Mammary epithelial cell (primary cell): ENCODE measurements at regions of chr5 and their contacts with region 1.

Region 1: GRCh38 chr5:176537608-176538504 is 654 bp upstream of the RNF44 start:
- DNase-seq: peak; percentile 99
- H3K4me3 ChIP-seq: peak overlapping the region; percentile 67 to 88 (median 68)
- H3K27ac ChIP-seq: peak overlapping the region; percentile 91
- H3K4me1 ChIP-seq: peaks cover 57% of the 10 kb centered on the region
- H3K27me3 ChIP-seq: no peaks in the 10 kb centered on the region
- CTCF ChIP-seq: no peak

Region 2: GRCh38 chr5:176388444-176389134 is 149.3 kb before region 1 on chr5 and contains the starts of genes HIGD2A and NOP16:
- CTCF ChIA-PET with region 1: no interaction called
- dilution Hi-C with region 1: no loop called
- in situ Hi-C with region 1: no loop called
- intact Hi-C with region 1: loop called (anchors 1 kb)
- DNase-seq: peak; percentile 98
- H3K4me3 ChIP-seq: peak within 1 kb of the TSS; percentile 67 to 79 (median 75)
- H3K27ac ChIP-seq: peak within 1 kb of the TSS; percentile 90
- H3K4me1 ChIP-seq: peaks cover 12% of the 10 kb centered on the region
- H3K27me3 ChIP-seq: no peaks in the 10 kb centered on the region
- CTCF ChIP-seq: no peak
- total RNA-seq, gene HIGD2A: 30.3 to 93.0 TPM
- total RNA-seq, gene NOP16: 8.7 to 61.4 TPM

Region 3: GRCh38 chr5:176447982-176448608 is 89.8 kb before region 1 on chr5 and contains the start of gene FAF2:
- CTCF ChIA-PET with region 1: interaction called, 7 read pairs
- dilution Hi-C with region 1: no loop called
- in situ Hi-C with region 1: no loop called
- intact Hi-C with region 1: loop called (anchors 1 kb)
- DNase-seq: peak; percentile 98
- H3K4me3 ChIP-seq: peak within 1 kb of the TSS; percentile 66 to 90 (median 82)
- H3K27ac ChIP-seq: peak within 1 kb of the TSS; percentile 85
- H3K4me1 ChIP-seq: peaks cover 5% of the 10 kb centered on the region
- H3K27me3 ChIP-seq: no peaks in the 10 kb centered on the region
- CTCF ChIP-seq: peak; percentile 93 to 98
- total RNA-seq, gene FAF2: 48.5 to 58.8 TPM

Region 4: GRCh38 chr5:176492431-176492830 is 45.4 kb before region 1 on chr5:
- CTCF ChIA-PET with region 1: no interaction called
- dilution Hi-C with region 1: no loop called
- in situ Hi-C with region 1: no loop called
- intact Hi-C with region 1: loop called (anchors 1 kb)
- DNase-seq: peak; percentile 88
- H3K4me3 ChIP-seq: no peak overlapping the region
- H3K27ac ChIP-seq: peak overlapping the region; percentile 18
- H3K4me1 ChIP-seq: peaks cover 26% of the 10 kb centered on the region
- H3K27me3 ChIP-seq: no peaks in the 10 kb centered on the region
- CTCF ChIP-seq: no peak

Region 5: GRCh38 chr5:176553262-176554077 is 15.6 kb after region 1 on chr5:
- CTCF ChIA-PET with region 1: no interaction called
- dilution Hi-C with region 1: no loop called
- in situ Hi-C with region 1: no loop called
- intact Hi-C with region 1: loop called (anchors 2 kb)
- DNase-seq: peak; percentile 98
- H3K4me3 ChIP-seq: no peak overlapping the region
- H3K27ac ChIP-seq: peak overlapping the region; percentile 54
- H3K4me1 ChIP-seq: peaks cover 18% of the 10 kb centered on the region
- H3K27me3 ChIP-seq: no peaks in the 10 kb centered on the region
- CTCF ChIP-seq: no peak

Region 6: GRCh38 chr5:176573564-176574296 is 35.9 kb after region 1 on chr5:
- CTCF ChIA-PET with region 1: no interaction called
- dilution Hi-C with region 1: no loop called
- in situ Hi-C with region 1: no loop called
- intact Hi-C with region 1: loop called (anchors 1 kb)
- DNase-seq: peak; percentile 20
- H3K4me3 ChIP-seq: no peak overlapping the region
- H3K27ac ChIP-seq: no peak overlapping the region
- H3K4me1 ChIP-seq: peaks cover 6% of the 10 kb centered on the region
- H3K27me3 ChIP-seq: no peaks in the 10 kb centered on the region
- CTCF ChIP-seq: peak; percentile 69 to 83

Region 7: GRCh38 chr5:176725521-176726280 is 187.8 kb after region 1 on chr5:
- CTCF ChIA-PET with region 1: no interaction called
- dilution Hi-C with region 1: no loop called
- in situ Hi-C with region 1: no loop called
- intact Hi-C with region 1: no loop called
- DNase-seq: no peak
- H3K4me3 ChIP-seq: no peak overlapping the region
- H3K27ac ChIP-seq: no peak overlapping the region
- H3K4me1 ChIP-seq: no peaks in the 10 kb centered on the region
- H3K27me3 ChIP-seq: no peaks in the 10 kb centered on the region
- CTCF ChIP-seq: no peak